ENCODE measurements at regions of chr9 and their contacts with region 1.

Region 1: DNA sequence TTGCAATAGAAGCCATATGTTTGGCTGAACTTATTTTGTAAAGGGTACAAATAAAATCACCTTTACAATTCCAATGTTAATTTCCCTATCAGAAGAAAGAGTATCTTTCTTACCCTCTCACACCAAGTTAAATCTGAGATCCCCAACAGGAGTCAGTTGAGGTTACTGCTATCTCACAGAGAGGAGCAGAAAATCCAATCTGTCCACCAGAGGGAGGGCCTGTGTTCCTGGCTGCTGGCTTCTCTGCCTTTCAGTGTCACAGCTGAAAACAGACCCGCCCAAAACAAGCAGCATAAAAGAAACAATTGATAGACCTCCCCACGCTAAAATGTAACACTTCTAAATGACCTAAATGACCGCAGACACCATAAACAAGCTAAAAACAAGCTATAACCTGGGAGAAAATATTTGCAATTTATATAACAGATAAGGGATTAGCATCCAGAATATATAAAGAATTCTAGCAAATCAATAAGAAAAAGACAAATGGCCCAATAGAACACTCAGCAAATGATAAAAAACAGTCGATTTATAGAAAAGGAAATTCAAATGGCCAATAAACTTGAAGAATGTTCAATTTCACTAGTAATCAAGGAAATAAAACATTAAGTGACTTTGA is 24.5 kb upstream of the MVB12B start:
- DNase-seq: peak; percentile 45
- H3K4me3 ChIP-seq: no peak overlapping the region
- H3K27ac ChIP-seq: no peak overlapping the region
- H3K4me1 ChIP-seq: no peaks in the 10 kb centered on the region
- H3K27me3 ChIP-seq: peaks cover 2% of the 10 kb centered on the region
- CTCF ChIP-seq: peak; percentile 60 to 87

Region 2: DNA sequence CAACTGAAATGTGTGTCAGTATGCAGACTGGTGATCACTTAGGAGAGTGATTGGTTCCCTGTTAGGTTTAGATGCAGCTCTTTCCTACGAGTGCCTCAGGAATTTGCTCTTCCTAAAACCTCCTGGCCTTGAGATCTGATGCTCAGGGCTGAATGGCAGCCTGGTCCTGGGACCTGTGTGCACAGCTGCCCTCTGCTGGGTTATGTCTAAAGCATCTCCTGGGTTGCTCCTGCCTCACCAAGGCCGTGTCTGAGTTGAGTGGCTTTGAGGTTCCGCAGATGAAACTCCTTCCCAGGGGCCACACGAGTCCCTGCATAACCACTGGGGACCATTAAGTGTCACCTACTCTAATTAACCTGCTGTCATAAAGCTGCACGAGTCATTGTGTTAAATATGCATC is 84.0 kb after region 1 on chr9:
- CTCF ChIA-PET with region 1: no interaction called
- dilution Hi-C with region 1: no loop called
- in situ Hi-C with region 1: loop called in 1 of 2 experiments (anchors 10 kb)
- intact Hi-C with region 1: loop called (anchors 1 kb)
- DNase-seq: no peak
- H3K4me3 ChIP-seq: no peak overlapping the region
- H3K27ac ChIP-seq: no peak overlapping the region
- H3K4me1 ChIP-seq: no peaks in the 10 kb centered on the region
- H3K27me3 ChIP-seq: no peaks in the 10 kb centered on the region
- CTCF ChIP-seq: peak; percentile 42 to 58

Region 3: GRCh38 chr9:126398403-126399058 is 96.4 kb after region 1 on chr9:
- CTCF ChIA-PET with region 1: no interaction called
- dilution Hi-C with region 1: no loop called
- in situ Hi-C with region 1: loop called (anchors 5 to 10 kb)
- intact Hi-C with region 1: loop called (anchors 1 kb)
- DNase-seq: peak; percentile 46
- H3K4me3 ChIP-seq: no peak overlapping the region
- H3K27ac ChIP-seq: no peak overlapping the region
- H3K4me1 ChIP-seq: peaks cover 13% of the 10 kb centered on the region
- H3K27me3 ChIP-seq: no peaks in the 10 kb centered on the region
- CTCF ChIP-seq: peak; percentile 93 to 100